Uterus (tissue), 4 donors: ENCODE measurements at regions of chr18 and their contacts with region 1.

Region 1: DNA sequence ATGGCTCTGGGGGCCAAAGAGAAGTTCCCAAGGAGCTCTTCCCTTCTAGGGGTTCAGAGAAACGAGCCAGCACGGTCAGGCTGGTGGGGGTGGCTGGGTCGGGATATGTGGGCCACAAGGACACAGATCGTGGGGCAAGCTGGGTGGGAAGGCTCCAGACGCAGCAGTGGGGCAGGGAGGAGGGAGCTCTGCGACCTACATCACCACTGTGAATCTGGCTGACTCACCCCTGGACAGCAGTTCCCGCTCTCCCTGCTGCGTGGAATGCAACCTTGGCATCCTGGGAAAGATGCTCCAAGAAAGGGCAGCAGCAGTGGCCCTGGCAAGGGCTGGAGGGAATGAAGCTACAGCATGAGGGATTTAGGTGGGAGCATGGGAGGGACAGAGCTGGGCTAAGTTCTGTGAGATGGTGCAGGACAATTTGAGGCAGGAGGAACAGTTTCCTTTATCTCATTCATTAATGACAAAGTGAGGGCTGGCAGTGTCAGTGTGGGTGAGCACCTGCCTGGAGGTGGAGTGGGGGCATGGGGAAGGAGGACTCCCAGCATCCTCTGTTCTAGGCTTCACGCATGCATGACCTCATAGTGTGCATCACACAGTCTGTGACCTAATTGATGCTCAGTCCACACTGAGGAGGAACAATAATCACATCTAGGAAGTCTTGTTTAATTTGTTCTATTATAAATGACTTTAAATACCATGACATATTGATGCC is 25.0 kb downstream of the CELF4 start:
- DNase-seq: no peak
- H3K4me3 ChIP-seq: no peak overlapping the region
- H3K27ac ChIP-seq: no peak overlapping the region
- H3K4me1 ChIP-seq: no peaks in the 10 kb centered on the region
- H3K27me3 ChIP-seq: peaks cover 0 to 9% of the 10 kb centered on the region in 2 donors
- CTCF ChIP-seq: no peak
- POLR2A ChIP-seq: no peak

Region 2: GRCh38 chr18:37385846-37386778 is 154.5 kb before region 1 on chr18:
- intact Hi-C with region 1: loop called (anchors 10 kb)
- DNase-seq: no peak
- H3K4me3 ChIP-seq: no peak overlapping the region
- H3K27ac ChIP-seq: no peak overlapping the region
- H3K4me1 ChIP-seq: no peaks in the 10 kb centered on the region
- H3K27me3 ChIP-seq: no peaks in the 10 kb centered on the region
- CTCF ChIP-seq: peak; percentile 37 to 68 (median 42)
- POLR2A ChIP-seq: no peak

Region 3: DNA sequence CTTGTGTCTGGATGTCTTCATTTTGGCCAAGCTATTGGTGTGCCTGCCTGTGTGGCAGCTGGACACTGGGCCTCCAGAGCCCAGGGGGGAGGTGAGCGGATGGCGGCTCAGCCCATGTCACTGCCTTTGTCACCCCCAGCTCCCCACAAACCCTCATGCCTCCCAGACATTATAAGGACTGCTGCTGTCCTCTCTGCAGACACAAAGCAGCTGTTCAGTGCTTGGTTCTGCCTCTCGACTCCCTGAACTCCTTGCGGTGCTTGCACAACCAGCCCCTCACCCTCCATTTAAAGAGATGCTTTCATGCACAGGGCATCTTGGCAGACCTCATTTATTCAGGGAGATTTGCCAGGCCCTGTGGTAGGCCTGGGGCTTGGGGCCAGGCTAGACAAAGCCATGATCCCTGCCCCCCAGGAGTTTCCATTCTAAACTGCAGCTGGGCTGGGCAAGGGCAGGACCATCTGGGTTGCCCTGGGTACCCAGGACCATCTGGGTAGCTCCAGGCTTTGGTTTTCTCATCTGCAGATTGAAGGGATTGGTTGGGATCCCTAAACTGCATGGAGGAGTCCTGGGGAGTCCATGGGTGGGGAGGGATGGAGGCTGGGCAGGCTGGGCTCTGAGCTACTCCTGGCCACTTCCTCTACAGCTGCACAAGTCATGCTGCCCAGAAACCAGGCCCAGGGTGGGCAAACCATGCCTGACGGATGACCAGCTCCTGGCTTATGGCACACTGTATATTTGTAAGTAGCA is 143.4 kb before region 1 on chr18:
- intact Hi-C with region 1: no loop called
- DNase-seq: no peak
- H3K4me3 ChIP-seq: no peak overlapping the region
- H3K27ac ChIP-seq: no peak overlapping the region
- H3K4me1 ChIP-seq: no peaks in the 10 kb centered on the region
- H3K27me3 ChIP-seq: no peaks in the 10 kb centered on the region
- CTCF ChIP-seq: no peak
- POLR2A ChIP-seq: no peak

Region 4: GRCh38 chr18:37419272-37419671 is 121.3 kb before region 1 on chr18:
- intact Hi-C with region 1: no loop called
- DNase-seq: no peak
- H3K4me3 ChIP-seq: no peak overlapping the region
- H3K27ac ChIP-seq: no peak overlapping the region
- H3K4me1 ChIP-seq: no peaks in the 10 kb centered on the region
- H3K27me3 ChIP-seq: no peaks in the 10 kb centered on the region
- CTCF ChIP-seq: no peak
- POLR2A ChIP-seq: no peak